B cell (primary cell): ENCODE measurements at regions of chr3 and their contacts with region 1.

Region 1: DNA sequence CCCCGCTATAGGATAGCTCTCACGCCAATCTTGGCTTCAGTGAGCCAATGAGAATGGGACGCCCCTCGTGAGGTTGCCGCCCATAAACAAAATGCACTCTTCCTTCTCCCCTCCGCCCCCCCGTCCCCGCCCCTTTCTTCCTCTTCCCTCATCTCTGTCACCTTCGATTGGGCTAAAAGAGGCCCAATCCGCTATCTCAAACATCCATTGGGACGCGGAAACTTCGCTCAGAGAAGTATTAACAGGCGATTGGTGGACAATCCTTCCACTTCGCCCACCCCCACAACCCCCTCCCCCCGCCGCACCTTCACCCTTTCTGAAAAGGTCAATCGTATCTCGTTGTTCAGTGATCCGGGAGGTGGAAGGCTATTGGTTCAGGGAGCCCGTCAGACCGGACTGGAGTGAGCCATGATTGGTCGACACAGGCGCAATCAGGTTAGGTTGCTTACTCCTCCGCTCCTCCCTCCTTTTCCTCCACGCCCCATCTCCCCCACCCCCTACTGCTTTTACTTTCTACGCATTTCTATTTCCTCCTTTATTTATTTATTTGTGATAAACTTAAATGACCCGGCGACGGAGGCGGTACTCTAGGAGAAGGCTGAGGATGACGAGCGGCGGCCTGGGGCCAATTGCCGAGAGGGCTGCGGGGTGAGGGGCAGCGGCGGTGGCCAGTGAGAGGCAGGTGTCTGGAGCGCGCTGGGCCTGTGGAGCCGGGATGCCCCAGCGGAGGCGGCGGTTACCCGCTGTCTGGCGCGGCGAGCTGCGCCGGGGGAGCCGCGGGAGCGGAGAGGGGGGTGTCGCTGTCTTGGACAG is 447 bp upstream of the ZBTB20 start:
- DNase-seq: peak; percentile 100
- ATAC-seq: peak; percentile 74
- H3K4me3 ChIP-seq: peak overlapping the region; percentile 82 to 96 (median 86)
- H3K4me3 Mint-ChIP-seq: peak overlapping the region; percentile 90
- H3K27ac ChIP-seq: peak overlapping the region; percentile 97 to 99
- H3K27ac Mint-ChIP-seq: peak overlapping the region; percentile 97
- H3K4me1 ChIP-seq: peaks cover 11 to 20% of the 10 kb centered on the region in 2 donors
- H3K4me1 Mint-ChIP-seq: peaks cover 31% of the 10 kb centered on the region
- H3K27me3 ChIP-seq: no peaks in the 10 kb centered on the region
- H3K27me3 Mint-ChIP-seq: no peaks in the 10 kb centered on the region
- CTCF ChIP-seq: no peak

Region 2: GRCh38 chr3:113838631-113839209 is 1308.8 kb before region 1 on chr3 and contains the start of gene GRAMD1C:
- CTCF ChIA-PET with region 1: no interaction called
- POLR2A ChIA-PET with region 1: no interaction called
- intact Hi-C with region 1: loop called (anchors 10 kb)
- DNase-seq: peak; percentile 92
- ATAC-seq: peak; percentile 99
- H3K4me3 ChIP-seq: peak within 1 kb of the TSS; percentile 59 to 84 (median 70)
- H3K4me3 Mint-ChIP-seq: peak within 1 kb of the TSS; percentile 91
- H3K27ac ChIP-seq: peak within 1 kb of the TSS; percentile 8 to 62
- H3K27ac Mint-ChIP-seq: peak within 1 kb of the TSS; percentile 71
- H3K4me1 ChIP-seq: peaks cover 7 to 13% of the 10 kb centered on the region in 2 donors
- H3K4me1 Mint-ChIP-seq: peaks cover 29% of the 10 kb centered on the region
- H3K27me3 ChIP-seq: no peaks in the 10 kb centered on the region
- H3K27me3 Mint-ChIP-seq: no peaks in the 10 kb centered on the region
- CTCF ChIP-seq: peak; percentile 84
- total RNA-seq, gene GRAMD1C: 47.1 and 52.5 TPM in 2 replicates

Region 3: DNA sequence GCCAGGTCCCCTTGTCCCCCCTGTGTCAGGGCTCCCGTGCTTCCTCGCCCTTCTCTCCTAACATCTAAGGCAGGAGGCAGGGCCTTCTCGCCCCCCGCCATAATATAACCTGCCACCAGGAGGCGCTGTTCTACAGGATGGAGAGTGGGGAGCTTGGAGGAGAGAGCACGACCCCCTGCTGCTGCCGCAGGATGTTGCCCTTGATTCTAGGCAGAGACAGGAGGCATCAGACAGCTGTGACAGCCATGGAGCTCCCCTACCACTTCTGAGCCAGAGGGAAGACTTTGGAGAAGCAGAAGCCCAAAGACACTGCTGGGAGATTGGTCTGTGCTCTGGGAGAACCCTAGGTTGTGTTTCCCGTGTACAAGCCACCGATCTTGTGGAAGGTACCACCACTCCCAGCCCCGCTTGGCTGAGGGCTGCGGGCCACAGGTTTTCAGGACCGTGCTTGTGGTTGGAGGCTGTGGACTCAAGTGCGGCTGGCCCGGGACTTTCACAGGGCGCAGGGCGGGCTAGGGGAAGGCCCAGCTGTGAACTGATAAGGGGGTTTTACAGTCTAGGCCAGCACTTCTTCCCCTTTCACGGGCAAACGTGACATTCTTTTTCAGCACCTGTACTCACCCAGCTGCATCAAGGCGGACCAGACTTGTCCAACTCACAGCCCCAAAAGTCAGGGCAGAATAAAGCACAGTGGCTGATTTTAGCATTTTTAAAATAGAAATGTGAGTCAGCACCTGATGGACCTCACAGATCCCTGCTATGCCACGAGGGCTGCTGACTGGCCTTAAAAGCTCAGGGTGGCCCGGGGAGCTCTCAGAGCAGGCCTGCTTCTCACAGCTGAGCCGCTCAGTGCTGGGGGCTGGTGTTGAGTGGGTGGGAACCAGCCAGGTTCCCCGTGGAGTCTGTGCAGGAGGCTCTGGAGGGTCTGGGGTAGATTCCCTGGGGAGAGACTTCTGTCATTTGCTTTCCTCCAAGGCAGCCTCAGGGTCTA is 856.3 kb before region 1 on chr3:
- CTCF ChIA-PET with region 1: no interaction called
- POLR2A ChIA-PET with region 1: no interaction called
- intact Hi-C with region 1: loop called (anchors 5 kb)
- DNase-seq: peak; percentile 94
- ATAC-seq: peak; percentile 86
- H3K4me3 ChIP-seq: peak overlapping the region in 2 of 5 experiments; percentile 33 to 40
- H3K4me3 Mint-ChIP-seq: peak overlapping the region; percentile 83
- H3K27ac ChIP-seq: peak overlapping the region; percentile 93
- H3K27ac Mint-ChIP-seq: peak overlapping the region; percentile 97
- H3K4me1 ChIP-seq: peaks cover 13 to 18% of the 10 kb centered on the region in 2 donors
- H3K4me1 Mint-ChIP-seq: peaks cover 30% of the 10 kb centered on the region
- H3K27me3 ChIP-seq: no peaks in the 10 kb centered on the region
- H3K27me3 Mint-ChIP-seq: no peaks in the 10 kb centered on the region
- CTCF ChIP-seq: peak; percentile 92

Region 4: DNA sequence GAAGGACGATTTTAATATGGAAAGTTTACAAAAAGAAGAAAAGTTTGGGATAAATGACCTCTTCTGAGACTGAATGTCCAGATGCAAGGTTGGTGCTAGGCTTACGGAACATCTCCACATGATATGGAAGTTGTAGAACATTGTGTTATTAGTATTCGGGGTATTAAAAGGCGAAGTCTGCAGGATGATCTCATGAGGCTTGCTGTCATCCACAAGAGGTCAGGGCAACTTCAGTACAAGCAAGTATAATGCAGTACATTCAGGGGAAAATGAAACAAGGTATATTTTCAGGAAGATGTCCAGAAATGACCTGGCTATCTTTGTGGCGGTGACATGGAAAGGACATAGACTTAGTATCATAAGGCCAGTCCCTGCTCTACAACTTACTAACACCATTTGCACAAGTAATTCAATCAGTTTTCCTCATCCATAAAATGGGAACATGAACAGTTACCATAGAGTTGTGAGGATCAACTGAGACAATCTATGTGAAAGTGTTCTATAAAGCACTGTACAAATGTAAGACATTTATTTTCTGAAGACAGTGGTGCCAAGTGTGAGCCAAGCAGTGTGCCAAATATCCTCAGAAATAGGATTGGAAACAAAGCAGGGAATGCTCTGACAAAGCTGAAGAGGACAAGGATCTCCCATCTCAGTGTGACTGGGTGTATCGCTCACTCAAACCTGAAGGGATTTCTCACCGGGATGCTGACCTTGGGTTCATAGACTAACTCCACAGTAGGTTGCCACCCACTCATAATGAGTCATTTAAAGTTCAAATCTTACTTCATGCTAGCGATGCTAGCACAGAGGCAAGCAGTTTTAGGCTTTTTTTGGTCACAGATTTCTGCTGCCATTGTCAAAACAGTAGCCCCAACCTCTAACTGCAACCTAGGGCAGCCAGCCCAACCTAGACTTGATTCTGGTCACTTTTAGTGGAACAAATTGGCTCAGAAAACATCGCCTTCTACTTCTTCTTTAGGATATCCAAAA is 735.4 kb before region 1 on chr3:
- CTCF ChIA-PET with region 1: no interaction called
- POLR2A ChIA-PET with region 1: interaction called, 14 read pairs
- intact Hi-C with region 1: no loop called
- DNase-seq: no peak
- ATAC-seq: no peak
- H3K4me3 ChIP-seq: no peak overlapping the region
- H3K4me3 Mint-ChIP-seq: no peak overlapping the region
- H3K27ac ChIP-seq: no peak overlapping the region
- H3K27ac Mint-ChIP-seq: no peak overlapping the region
- H3K4me1 ChIP-seq: no peaks in the 10 kb centered on the region
- H3K4me1 Mint-ChIP-seq: peaks cover 40% of the 10 kb centered on the region
- H3K27me3 ChIP-seq: no peaks in the 10 kb centered on the region
- H3K27me3 Mint-ChIP-seq: no peaks in the 10 kb centered on the region
- CTCF ChIP-seq: no peak

Region 5: GRCh38 chr3:114958930-114959329 is 188.6 kb before region 1 on chr3:
- CTCF ChIA-PET with region 1: no interaction called
- POLR2A ChIA-PET with region 1: no interaction called
- intact Hi-C with region 1: no loop called
- DNase-seq: no peak
- ATAC-seq: no peak
- H3K4me3 ChIP-seq: no peak overlapping the region
- H3K4me3 Mint-ChIP-seq: no peak overlapping the region
- H3K27ac ChIP-seq: no peak overlapping the region
- H3K27ac Mint-ChIP-seq: no peak overlapping the region
- H3K4me1 ChIP-seq: no peaks in the 10 kb centered on the region
- H3K4me1 Mint-ChIP-seq: peaks cover 9% of the 10 kb centered on the region
- H3K27me3 ChIP-seq: no peaks in the 10 kb centered on the region
- H3K27me3 Mint-ChIP-seq: no peaks in the 10 kb centered on the region
- CTCF ChIP-seq: no peak

Region 6: DNA sequence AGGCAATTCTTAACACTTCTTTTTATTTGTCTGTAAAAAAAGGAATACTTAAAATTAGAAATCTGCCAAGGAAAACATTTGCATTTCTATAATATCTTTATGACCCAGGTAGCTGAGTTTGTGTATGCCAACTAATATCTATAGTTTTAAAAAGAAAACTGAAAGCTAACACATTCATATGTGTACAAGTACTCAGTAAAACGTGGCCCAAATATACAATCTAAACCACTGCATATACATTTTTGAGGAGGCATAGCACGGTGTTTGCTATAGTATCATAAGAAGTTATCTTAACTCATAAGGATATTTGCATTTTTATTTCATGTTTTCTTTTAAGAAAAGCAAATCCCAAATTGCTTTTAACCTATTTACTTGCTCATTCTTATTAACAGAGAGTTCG is 173.1 kb before region 1 on chr3:
- CTCF ChIA-PET with region 1: no interaction called
- POLR2A ChIA-PET with region 1: no interaction called
- intact Hi-C with region 1: no loop called
- DNase-seq: no peak
- ATAC-seq: no peak
- H3K4me3 ChIP-seq: no peak overlapping the region
- H3K4me3 Mint-ChIP-seq: no peak overlapping the region
- H3K27ac ChIP-seq: no peak overlapping the region
- H3K27ac Mint-ChIP-seq: no peak overlapping the region
- H3K4me1 ChIP-seq: no peaks in the 10 kb centered on the region
- H3K4me1 Mint-ChIP-seq: peaks cover 2% of the 10 kb centered on the region
- H3K27me3 ChIP-seq: no peaks in the 10 kb centered on the region
- H3K27me3 Mint-ChIP-seq: no peaks in the 10 kb centered on the region
- CTCF ChIP-seq: no peak

Region 7: GRCh38 chr3:115022835-115023398 is 124.6 kb before region 1 on chr3:
- CTCF ChIA-PET with region 1: no interaction called
- POLR2A ChIA-PET with region 1: no interaction called
- intact Hi-C with region 1: no loop called
- DNase-seq: peak; percentile 6
- ATAC-seq: no peak
- H3K4me3 ChIP-seq: no peak overlapping the region
- H3K4me3 Mint-ChIP-seq: no peak overlapping the region
- H3K27ac ChIP-seq: no peak overlapping the region
- H3K27ac Mint-ChIP-seq: no peak overlapping the region
- H3K4me1 ChIP-seq: peaks cover 3 to 11% of the 10 kb centered on the region in 2 donors
- H3K4me1 Mint-ChIP-seq: peaks cover 23% of the 10 kb centered on the region
- H3K27me3 ChIP-seq: no peaks in the 10 kb centered on the region
- H3K27me3 Mint-ChIP-seq: no peaks in the 10 kb centered on the region
- CTCF ChIP-seq: no peak

Region 8: GRCh38 chr3:115092220-115092791 is 55.2 kb before region 1 on chr3:
- CTCF ChIA-PET with region 1: interaction called, 3 read pairs
- POLR2A ChIA-PET with region 1: no interaction called
- intact Hi-C with region 1: loop called (anchors 2 kb)
- DNase-seq: peak; percentile 69
- ATAC-seq: peak; percentile 33
- H3K4me3 ChIP-seq: no peak overlapping the region
- H3K4me3 Mint-ChIP-seq: no peak overlapping the region
- H3K27ac ChIP-seq: no peak overlapping the region
- H3K27ac Mint-ChIP-seq: no peak overlapping the region
- H3K4me1 ChIP-seq: no peaks in the 10 kb centered on the region
- H3K4me1 Mint-ChIP-seq: peaks cover 6% of the 10 kb centered on the region
- H3K27me3 ChIP-seq: no peaks in the 10 kb centered on the region
- H3K27me3 Mint-ChIP-seq: no peaks in the 10 kb centered on the region
- CTCF ChIP-seq: peak; percentile 82

Region 9: GRCh38 chr3:115187149-115187757 is 39.7 kb after region 1 on chr3:
- CTCF ChIA-PET with region 1: no interaction called
- POLR2A ChIA-PET with region 1: interaction called, 18 read pairs
- intact Hi-C with region 1: loop called (anchors 2 kb)
- DNase-seq: peak; percentile 70
- ATAC-seq: peak; percentile 99
- H3K4me3 ChIP-seq: peak overlapping the region in 4 of 5 experiments; percentile 16 to 69 (median 43)
- H3K4me3 Mint-ChIP-seq: peak overlapping the region; percentile 78
- H3K27ac ChIP-seq: peak overlapping the region; percentile 75 to 78
- H3K27ac Mint-ChIP-seq: peak overlapping the region; percentile 97
- H3K4me1 ChIP-seq: peaks cover 23% of the 10 kb centered on the region in 2 donors
- H3K4me1 Mint-ChIP-seq: peaks cover 22% of the 10 kb centered on the region
- H3K27me3 ChIP-seq: no peaks in the 10 kb centered on the region
- H3K27me3 Mint-ChIP-seq: no peaks in the 10 kb centered on the region
- CTCF ChIP-seq: no peak

Region 10: GRCh38 chr3:115658337-115659181 is 511.0 kb after region 1 on chr3:
- CTCF ChIA-PET with region 1: no interaction called
- POLR2A ChIA-PET with region 1: interaction called, 4 read pairs
- intact Hi-C with region 1: loop called (anchors 1 kb)
- DNase-seq: peak; percentile 86
- ATAC-seq: peak; percentile 97
- H3K4me3 ChIP-seq: peak overlapping the region; percentile 66 to 93 (median 70)
- H3K4me3 Mint-ChIP-seq: peak overlapping the region; percentile 94
- H3K27ac ChIP-seq: peak overlapping the region; percentile 88 to 93
- H3K27ac Mint-ChIP-seq: peak overlapping the region; percentile 100
- H3K4me1 ChIP-seq: peaks cover 14 to 33% of the 10 kb centered on the region in 2 donors
- H3K4me1 Mint-ChIP-seq: peaks cover 39% of the 10 kb centered on the region
- H3K27me3 ChIP-seq: no peaks in the 10 kb centered on the region
- H3K27me3 Mint-ChIP-seq: no peaks in the 10 kb centered on the region
- CTCF ChIP-seq: no peak